ENCODE measurements at regions of chr7 and their contacts with region 1.

Region 1: DNA sequence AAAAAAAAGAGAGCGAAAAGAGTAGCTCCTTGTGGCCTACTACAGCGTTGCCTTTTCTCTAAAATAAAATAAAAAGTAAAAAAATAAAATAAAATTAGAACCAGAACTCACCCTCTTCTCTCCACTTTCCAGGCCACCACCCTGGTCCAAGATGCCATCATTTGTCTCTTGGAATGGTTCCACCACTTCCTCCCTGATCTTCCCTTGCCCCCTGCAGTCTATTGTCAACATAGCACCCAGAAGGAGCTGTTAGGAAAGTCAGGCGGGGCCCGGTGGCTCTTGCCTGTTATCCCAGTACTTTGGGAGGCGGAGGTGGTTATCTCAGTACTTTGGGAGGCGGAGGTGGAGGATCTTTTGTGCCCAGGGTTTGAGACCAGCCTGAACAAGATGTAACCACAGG is 7.6 kb upstream of the GRID2IP start:
- DNase-seq: peak; percentile 65
- H3K4me3 Mint-ChIP-seq: no peak overlapping the region
- H3K27ac Mint-ChIP-seq: no peak overlapping the region
- H3K4me1 Mint-ChIP-seq: no peaks in the 10 kb centered on the region
- H3K27me3 Mint-ChIP-seq: no peaks in the 10 kb centered on the region
- CTCF ChIP-seq: peak; percentile 25

Region 2: DNA sequence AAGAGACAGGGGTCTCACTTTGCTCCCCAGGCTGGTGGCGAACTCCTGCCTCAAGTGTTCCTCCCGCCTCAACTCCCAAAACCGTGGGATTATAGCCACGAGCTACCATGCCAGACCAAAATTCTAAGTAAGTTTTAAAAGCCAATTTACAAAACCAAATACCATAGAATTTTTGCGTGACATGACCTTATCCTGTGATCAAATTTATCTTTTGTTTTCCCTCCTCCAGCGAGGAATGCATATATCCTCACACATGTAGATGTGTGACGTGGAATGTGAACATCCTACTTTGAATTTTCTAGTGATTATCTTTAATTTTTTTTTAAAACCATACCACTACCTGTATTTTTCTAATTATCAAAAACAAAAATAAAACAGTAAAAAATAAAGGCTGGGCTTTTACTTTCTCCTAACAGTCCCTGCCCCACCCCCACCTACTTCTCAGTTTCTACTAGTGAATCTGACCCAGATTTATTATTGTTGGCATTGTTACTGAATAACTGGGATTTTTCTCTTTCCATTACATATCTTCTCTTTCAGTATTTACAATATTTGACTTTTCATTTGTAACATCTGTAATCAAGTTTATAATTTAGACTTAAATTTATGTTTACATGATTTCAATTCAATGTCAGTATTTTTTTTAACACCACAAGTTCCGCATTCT is 312.5 kb before region 1 on chr7:
- CTCF ChIA-PET with region 1: no interaction called
- POLR2A ChIA-PET with region 1: no interaction called
- intact Hi-C with region 1: no loop called
- DNase-seq: peak; percentile 43
- H3K4me3 Mint-ChIP-seq: peak overlapping the region; percentile 5
- H3K27ac Mint-ChIP-seq: peak overlapping the region; percentile 46
- H3K4me1 Mint-ChIP-seq: peaks cover 44% of the 10 kb centered on the region
- H3K27me3 Mint-ChIP-seq: no peaks in the 10 kb centered on the region
- CTCF ChIP-seq: no peak

Region 3: DNA sequence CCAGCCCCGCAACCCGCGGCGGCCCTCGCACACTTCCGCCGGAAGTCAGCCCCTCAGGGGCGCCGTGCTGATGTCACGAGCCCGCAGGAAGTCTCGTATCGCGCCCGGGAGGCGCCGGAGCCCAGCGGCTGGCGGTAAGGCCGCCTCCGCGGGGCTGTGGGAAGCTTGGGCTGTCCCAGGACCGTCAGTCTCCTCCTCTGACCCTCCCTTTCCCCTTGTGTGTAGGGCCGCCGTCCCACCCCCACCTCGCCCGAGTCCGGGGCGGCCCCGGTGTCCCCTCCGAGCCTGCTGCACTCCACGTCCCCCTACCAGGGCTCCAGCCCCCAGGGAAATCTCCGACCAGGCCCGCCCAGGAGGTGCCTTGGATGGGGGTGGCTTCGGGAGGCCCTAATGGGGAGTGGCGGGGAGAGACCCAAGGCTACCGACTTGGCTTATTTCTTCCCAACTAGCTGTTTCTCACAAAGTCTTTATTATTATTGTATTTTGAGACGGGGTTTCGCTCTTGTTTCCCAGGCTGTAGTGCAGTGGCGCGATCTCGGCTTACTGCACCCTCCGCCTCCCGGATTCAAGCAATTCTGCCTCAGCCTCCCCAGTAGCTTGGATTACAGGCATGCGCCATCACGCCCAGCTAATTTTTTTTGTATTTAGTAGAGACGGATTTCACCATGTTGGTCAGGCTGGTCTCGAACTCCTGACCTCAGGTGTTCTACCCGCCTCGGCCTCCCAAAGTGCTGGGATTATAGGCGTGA is 18.7 kb after region 1 on chr7 and contains the start of gene ZDHHC4:
- CTCF ChIA-PET with region 1: interaction called, 12 read pairs
- POLR2A ChIA-PET with region 1: no interaction called
- intact Hi-C with region 1: no loop called
- DNase-seq: peak; percentile 80
- H3K4me3 Mint-ChIP-seq: peak within 1 kb of the TSS; percentile 85
- H3K27ac Mint-ChIP-seq: peak within 1 kb of the TSS; percentile 95
- H3K4me1 Mint-ChIP-seq: peaks cover 10% of the 10 kb centered on the region
- H3K27me3 Mint-ChIP-seq: no peaks in the 10 kb centered on the region
- CTCF ChIP-seq: no peak
- total RNA-seq, gene ZDHHC4: 41.8 and 45.6 TPM in 2 replicates

Region 4: GRCh38 chr7:6725003-6725402 is 166.2 kb after region 1 on chr7:
- CTCF ChIA-PET with region 1: no interaction called
- POLR2A ChIA-PET with region 1: no interaction called
- intact Hi-C with region 1: no loop called
- DNase-seq: no peak
- H3K4me3 Mint-ChIP-seq: no peak overlapping the region
- H3K27ac Mint-ChIP-seq: no peak overlapping the region
- H3K4me1 Mint-ChIP-seq: peaks cover 5% of the 10 kb centered on the region
- H3K27me3 Mint-ChIP-seq: no peaks in the 10 kb centered on the region
- CTCF ChIP-seq: no peak